ENCODE measurements at regions of chr14 and their contacts with region 1.

Region 1: DNA sequence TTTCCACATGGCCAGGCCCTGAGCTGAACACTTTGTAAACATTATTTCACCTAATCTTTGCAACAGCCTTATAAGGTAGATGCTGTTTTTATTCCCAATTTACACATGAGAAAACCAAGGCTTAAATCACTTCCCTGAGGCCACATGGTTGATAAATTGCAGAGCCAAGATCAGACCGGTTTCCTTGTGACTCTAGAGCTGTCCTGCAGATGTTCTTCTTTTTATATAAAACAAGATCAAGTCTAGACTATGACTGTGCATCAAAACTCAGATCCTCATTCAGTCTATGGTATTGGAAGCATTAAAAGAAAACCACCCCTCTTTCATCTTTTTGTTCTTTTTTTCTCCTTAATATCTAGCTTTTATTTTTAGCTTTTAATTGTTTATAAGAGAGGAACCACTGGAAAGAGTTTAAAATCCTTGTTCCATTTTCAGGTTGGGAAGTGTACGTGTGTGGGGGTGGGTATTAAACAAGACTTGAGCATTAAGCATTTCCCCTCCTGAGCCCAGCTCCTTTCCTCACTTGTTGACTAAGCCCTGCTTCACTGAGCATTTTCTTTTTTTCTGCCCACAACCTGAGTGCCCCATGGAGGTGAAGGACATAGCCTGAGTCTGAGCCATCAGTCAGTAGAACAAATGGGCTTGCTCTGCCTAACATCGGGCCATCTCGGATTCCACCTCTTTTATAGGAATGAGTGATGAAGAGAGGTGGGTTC is 45.4 kb downstream of the GPATCH2L start:
- DNase-seq: no peak
- H3K4me3 ChIP-seq: no peak overlapping the region
- CTCF ChIP-seq: no peak

Region 2: GRCh38 chr14:76181546-76181945 is 15.6 kb before region 1 on chr14:
- CTCF ChIA-PET with region 1: interaction called, 12 read pairs
- POLR2A ChIA-PET with region 1: no interaction called
- DNase-seq: no peak
- H3K4me3 ChIP-seq: no peak overlapping the region
- CTCF ChIP-seq: no peak

Region 3: GRCh38 chr14:76208340-76208739 is 11.2 kb after region 1 on chr14:
- CTCF ChIA-PET with region 1: no interaction called
- POLR2A ChIA-PET with region 1: no interaction called
- DNase-seq: no peak
- H3K4me3 ChIP-seq: no peak overlapping the region
- CTCF ChIP-seq: no peak

Region 4: DNA sequence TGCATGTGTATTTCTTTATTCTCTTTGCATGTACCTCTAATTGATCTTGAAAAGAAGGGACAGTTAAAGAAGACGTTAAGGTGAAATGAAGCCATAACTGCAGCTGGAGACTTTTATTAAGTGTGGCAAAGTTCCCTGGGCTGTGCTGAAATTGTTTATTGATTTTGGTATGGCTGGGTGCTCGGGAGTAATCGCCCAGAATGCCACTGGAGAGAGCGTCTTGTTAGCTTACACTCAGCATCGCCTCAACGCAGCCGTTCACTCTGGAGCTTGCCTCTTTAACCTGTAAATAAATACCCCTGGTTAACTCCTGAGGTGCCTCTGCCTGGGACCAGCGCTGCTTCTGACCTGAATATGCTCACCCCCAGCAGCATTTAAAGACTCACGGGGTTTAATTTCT is 53.2 kb after region 1 on chr14:
- CTCF ChIA-PET with region 1: no interaction called
- POLR2A ChIA-PET with region 1: no interaction called
- DNase-seq: no peak
- H3K4me3 ChIP-seq: no peak overlapping the region
- CTCF ChIP-seq: no peak